GM13977 (cell line): ENCODE measurements at regions of chr9 and their contacts with region 1.

Region 1: DNA sequence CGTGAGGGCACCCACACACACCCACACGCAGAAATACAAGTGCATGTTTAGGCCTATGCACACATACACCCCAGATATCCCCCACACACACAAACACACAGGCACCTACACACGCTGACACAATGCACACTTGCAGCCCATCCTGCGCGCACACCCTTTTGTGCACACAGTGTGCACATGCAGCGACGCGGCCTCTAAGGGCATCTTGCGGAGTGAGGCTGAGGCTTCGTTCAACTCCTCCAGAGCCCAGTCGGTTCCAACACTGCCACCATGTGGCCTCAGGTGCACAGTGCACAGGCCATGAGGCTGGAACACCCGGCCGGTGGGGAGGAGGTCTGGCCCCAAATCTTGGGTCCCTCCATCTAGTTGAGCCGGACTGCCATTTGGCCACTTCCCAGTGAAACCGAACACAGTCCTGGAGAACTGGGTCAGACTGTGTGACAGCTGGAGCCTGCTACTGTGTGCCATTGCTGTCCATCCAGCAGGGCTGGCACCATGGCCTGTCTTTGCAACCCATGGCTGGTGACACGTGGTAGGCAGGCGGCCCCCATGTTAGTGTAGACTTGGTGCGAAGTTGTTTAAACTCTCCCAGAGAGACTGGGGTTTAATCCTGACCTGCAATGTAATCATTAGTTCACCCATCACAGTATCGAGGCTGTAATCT is 97.7 kb upstream of the MVB12B start:
- DNase-seq: peak; percentile 86
- CTCF ChIP-seq: peak; percentile 97

Region 2: GRCh38 chr9:125407974-125408900 is 820.7 kb before region 1 on chr9:
- in situ Hi-C with region 1: loop called (anchors 25 kb)
- DNase-seq: peak; percentile 92
- CTCF ChIP-seq: peak; percentile 90

Region 3: GRCh38 chr9:126183266-126183665 is 45.6 kb before region 1 on chr9:
- in situ Hi-C with region 1: no loop called
- DNase-seq: no peak
- CTCF ChIP-seq: no peak